Left cardiac atrium (tissue), 4 donors: ENCODE measurements at regions of chr15 and their contacts with region 1.

Region 1: DNA sequence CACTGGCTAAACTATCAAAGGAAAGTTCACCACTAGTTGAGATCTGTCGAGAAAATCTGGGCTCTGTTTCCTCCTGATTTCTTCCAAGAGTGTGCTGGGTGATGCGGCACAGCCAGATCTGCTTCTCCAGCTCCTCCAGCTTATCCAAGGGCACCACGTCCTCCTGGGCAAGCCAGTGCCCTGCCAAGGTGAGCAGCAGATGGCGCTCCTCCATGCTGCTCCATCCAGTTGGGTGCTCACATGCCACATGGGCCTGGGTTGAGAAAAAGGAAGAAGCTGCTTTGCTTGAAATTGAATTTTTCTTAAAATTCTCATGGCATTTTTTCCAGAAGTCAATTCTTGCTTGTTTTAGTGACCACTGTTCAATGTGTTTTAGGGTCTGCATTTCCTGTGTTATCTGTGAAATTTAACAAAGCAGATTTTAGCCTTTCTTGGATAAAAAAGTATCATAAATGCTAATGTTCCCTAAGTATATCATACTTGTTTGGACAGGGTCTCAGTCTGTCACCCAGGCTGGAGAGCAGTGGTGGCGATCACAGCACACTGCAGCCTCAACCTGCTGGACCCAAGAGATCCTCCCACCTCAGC is 47.3 kb downstream of the EIF3J start:
- DNase-seq: peak; percentile 36
- ATAC-seq: peak; percentile 62 to 79

Region 2: DNA sequence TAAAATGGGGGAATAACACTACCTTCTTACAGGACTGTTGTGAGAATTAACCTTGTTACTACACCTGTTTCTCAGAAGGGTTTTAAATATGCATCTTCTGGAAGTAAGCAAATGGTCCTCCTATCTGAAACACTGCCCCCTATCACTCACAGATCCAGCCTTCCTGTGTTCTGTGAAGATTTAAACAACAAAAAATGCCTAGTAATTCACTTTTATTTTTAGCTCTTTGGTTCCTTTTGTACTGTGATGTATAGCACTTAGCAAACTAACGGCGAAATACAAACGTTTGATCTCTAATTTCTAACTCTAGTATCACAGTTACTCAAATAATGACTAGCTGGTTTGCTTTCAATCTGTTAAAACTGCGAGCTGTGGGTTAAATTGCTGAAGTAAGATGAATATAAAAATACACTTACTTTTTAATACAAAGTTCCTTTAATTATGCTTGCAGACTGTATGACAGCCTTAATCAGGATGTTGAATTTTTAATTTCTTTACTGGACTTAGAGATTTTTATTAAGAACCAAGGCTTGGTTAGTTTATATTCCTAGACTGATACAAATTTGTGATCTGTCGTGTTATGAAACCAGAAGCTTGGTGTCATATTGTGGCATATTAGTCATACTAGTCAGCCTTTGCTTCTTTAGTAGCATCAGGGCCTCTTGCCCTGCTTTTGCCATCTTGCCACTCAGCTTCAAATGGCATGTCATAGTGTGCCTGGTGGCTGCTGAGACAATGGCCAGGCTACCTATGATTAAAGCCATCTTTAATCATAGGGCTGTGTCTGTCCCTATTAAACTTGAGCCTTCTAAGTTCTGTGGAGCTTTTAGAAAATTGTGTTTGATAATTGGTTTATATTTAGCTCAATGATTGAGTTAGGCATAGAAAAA is 38.1 kb before region 1 on chr15:
- intact Hi-C with region 1: no loop called
- DNase-seq: no peak
- ATAC-seq: peak; percentile 62 to 68

Region 3: GRCh38 chr15:44738340-44738984 is 154.2 kb after region 1 on chr15:
- intact Hi-C with region 1: loop called in 1 of 2 experiments (anchors 10 kb)
- DNase-seq: no peak
- ATAC-seq: peak; percentile 25 to 40